Endothelial cell of umbilical vein (primary cell): ENCODE measurements at regions of chr7 and their contacts with region 1.

Region 1: DNA sequence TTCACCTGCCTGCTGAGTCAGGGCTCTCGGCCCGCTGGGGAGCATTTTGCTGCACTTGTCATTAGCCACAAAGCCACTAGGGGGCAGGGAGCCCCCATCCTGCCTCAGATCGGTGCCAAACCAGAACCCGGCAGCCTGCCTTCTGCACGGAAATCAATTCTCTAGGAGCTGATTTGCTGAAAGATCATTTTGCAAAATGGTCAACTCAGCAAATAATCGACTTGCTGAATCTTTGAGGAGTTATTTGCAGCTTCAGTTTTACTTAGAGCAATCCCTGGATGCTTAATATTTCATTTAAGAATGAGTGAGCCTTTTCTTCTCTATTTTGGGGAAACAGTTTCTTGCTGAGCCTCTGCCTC is 1.7 kb upstream of the GIMAP8 start:
- DNase-seq: peak; percentile 87
- H3K4me3 ChIP-seq: no peak overlapping the region
- H3K27ac ChIP-seq: no peak overlapping the region
- H3K4me1 ChIP-seq: peaks cover 33% of the 10 kb centered on the region
- H3K27me3 ChIP-seq: no peaks in the 10 kb centered on the region
- CTCF ChIP-seq: peak; percentile 93 to 96
- POLR2A ChIP-seq: no peak

Region 2: DNA sequence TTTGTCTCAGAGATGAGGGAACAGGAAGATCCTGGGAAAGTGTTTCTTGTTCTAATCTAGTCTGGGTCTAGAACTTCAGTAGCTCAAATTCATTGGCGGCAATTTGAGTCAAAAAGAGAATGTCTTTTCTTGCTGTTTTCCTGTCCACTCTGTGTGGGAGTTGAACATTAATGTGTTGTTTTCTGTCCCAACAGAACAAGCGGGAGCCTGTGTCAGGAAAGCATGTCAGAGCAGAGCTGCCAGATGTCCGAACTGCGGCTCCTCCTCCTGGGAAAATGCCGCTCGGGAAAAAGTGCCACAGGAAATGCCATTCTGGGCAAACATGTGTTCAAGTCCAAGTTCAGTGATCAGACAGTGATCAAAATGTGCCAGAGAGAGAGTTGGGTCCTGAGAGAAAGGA is 17.7 kb after region 1 on chr7:
- CTCF ChIA-PET with region 1: interaction called, 9 read pairs
- POLR2A ChIA-PET with region 1: interaction called, 3 read pairs
- dilution Hi-C with region 1: no loop called
- intact Hi-C with region 1: loop called (anchors 1 kb)
- DNase-seq: peak; percentile 93
- H3K4me3 ChIP-seq: peak overlapping the region in 2 of 3 experiments; percentile 30 to 77
- H3K27ac ChIP-seq: peak overlapping the region; percentile 53
- H3K4me1 ChIP-seq: peaks cover 22% of the 10 kb centered on the region
- H3K27me3 ChIP-seq: no peaks in the 10 kb centered on the region
- CTCF ChIP-seq: no peak
- POLR2A ChIP-seq: no peak

Region 3: DNA sequence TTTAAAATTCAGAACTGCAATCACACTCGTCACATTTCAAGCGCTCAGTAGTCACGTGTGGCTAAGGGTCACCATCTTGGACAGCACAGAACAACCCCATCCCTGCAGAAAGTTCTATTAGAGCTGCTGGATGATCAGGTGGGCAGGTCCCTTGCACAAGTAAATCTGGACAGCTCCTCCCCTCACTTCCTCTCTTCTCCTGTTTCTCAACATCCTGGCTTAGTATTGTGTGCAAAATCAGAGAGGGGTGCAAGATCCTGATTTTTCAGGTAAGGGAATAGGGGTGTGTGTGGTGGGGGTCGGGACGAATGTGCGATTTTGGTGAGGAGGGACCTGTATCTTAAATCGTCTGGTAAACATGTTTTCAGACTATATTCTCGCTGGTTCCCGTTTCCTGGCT is 118.4 kb after region 1 on chr7 and contains the start of gene GIMAP4:
- CTCF ChIA-PET with region 1: interaction called, 19 read pairs
- POLR2A ChIA-PET with region 1: interaction called, 3 read pairs
- dilution Hi-C with region 1: no loop called
- intact Hi-C with region 1: loop called (anchors 1 kb)
- DNase-seq: peak; percentile 69
- H3K4me3 ChIP-seq: peak within 1 kb of the TSS; percentile 78 to 80 (median 79)
- H3K27ac ChIP-seq: peak within 1 kb of the TSS; percentile 63
- H3K4me1 ChIP-seq: peaks cover 62% of the 10 kb centered on the region
- H3K27me3 ChIP-seq: no peaks in the 10 kb centered on the region
- CTCF ChIP-seq: no peak
- POLR2A ChIP-seq: peak; percentile 49
- total RNA-seq, gene GIMAP4: 168 and 174 TPM in 2 replicates

Region 4: GRCh38 chr7:150631866-150632864 is 183.4 kb after region 1 on chr7 and contains the start of gene GIMAP6:
- CTCF ChIA-PET with region 1: interaction called, 12 read pairs
- POLR2A ChIA-PET with region 1: interaction called, 3 read pairs
- dilution Hi-C with region 1: no loop called
- intact Hi-C with region 1: loop called (anchors 1 kb)
- DNase-seq: peak; percentile 74
- H3K4me3 ChIP-seq: peak within 1 kb of the TSS; percentile 7 to 80 (median 49)
- H3K27ac ChIP-seq: peak within 1 kb of the TSS; percentile 43
- H3K4me1 ChIP-seq: peaks cover 35% of the 10 kb centered on the region
- H3K27me3 ChIP-seq: no peaks in the 10 kb centered on the region
- CTCF ChIP-seq: no peak
- POLR2A ChIP-seq: peak; percentile 69
- total RNA-seq, gene GIMAP6: 85.0 and 87.8 TPM in 2 replicates

Region 5: DNA sequence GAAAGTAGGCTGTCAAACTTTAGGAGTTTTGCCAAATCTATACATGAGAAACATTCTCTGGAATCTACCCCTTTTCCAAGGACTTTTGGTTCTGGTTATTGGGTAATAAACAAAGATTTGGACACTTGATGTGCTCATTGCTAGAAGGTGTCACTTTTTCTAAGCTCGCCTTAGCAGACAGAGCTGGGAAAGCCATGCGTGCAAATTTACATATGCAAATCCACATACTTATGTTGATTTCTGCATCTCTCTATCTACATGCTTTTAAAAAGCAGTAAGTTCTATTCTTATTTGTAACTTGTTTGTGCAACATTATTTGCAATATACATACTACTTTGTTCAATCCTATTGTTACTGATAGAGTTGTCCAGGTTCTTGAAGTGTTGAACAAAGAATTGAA is 205.9 kb after region 1 on chr7:
- CTCF ChIA-PET with region 1: no interaction called
- POLR2A ChIA-PET with region 1: no interaction called
- dilution Hi-C with region 1: no loop called
- intact Hi-C with region 1: no loop called
- DNase-seq: no peak
- H3K4me3 ChIP-seq: no peak overlapping the region
- H3K27ac ChIP-seq: no peak overlapping the region
- H3K4me1 ChIP-seq: no peaks in the 10 kb centered on the region
- H3K27me3 ChIP-seq: no peaks in the 10 kb centered on the region
- CTCF ChIP-seq: no peak
- POLR2A ChIP-seq: no peak

Region 6: DNA sequence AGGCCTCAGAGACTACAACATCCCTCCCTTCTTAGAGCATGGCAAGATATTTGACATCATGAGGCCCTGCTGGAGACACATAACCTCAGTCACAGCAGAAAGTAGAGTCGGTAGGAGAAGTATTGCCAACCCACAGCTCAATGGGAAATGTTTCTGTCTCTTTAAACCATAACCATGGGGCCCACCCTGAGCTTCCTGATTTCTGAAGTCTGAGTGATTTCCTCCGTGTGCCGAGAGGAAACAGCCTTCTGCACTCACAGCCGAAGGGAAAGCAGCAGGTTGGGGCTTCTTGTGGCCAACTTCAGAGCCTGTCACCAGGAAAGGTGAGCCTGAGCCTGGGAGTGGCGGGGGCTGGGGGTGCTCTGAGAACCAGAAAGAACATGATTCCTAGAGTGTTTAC is 267.6 kb after region 1 on chr7 and contains the start of gene GIMAP1:
- CTCF ChIA-PET with region 1: interaction called, 19 read pairs
- POLR2A ChIA-PET with region 1: interaction called, 8 read pairs
- dilution Hi-C with region 1: no loop called
- intact Hi-C with region 1: loop called (anchors 1 kb)
- DNase-seq: peak; percentile 88
- H3K4me3 ChIP-seq: peak within 1 kb of the TSS; percentile 61 to 84 (median 78)
- H3K27ac ChIP-seq: peak within 1 kb of the TSS; percentile 39
- H3K4me1 ChIP-seq: peaks cover 18% of the 10 kb centered on the region
- H3K27me3 ChIP-seq: no peaks in the 10 kb centered on the region
- CTCF ChIP-seq: no peak
- POLR2A ChIP-seq: peak; percentile 97
- total RNA-seq, gene GIMAP1: 11.8 and 11.9 TPM in 2 replicates

Region 7: GRCh38 chr7:150753826-150754603 is 305.2 kb after region 1 on chr7:
- CTCF ChIA-PET with region 1: interaction called, 120 read pairs
- POLR2A ChIA-PET with region 1: interaction called, 3 read pairs
- dilution Hi-C with region 1: no loop called
- intact Hi-C with region 1: loop called (anchors 1 kb)
- DNase-seq: peak; percentile 95
- H3K4me3 ChIP-seq: no peak overlapping the region
- H3K27ac ChIP-seq: peak overlapping the region; percentile 2
- H3K4me1 ChIP-seq: peaks cover 22% of the 10 kb centered on the region
- H3K27me3 ChIP-seq: no peaks in the 10 kb centered on the region
- CTCF ChIP-seq: peak; percentile 21 to 55
- POLR2A ChIP-seq: no peak

Region 8: DNA sequence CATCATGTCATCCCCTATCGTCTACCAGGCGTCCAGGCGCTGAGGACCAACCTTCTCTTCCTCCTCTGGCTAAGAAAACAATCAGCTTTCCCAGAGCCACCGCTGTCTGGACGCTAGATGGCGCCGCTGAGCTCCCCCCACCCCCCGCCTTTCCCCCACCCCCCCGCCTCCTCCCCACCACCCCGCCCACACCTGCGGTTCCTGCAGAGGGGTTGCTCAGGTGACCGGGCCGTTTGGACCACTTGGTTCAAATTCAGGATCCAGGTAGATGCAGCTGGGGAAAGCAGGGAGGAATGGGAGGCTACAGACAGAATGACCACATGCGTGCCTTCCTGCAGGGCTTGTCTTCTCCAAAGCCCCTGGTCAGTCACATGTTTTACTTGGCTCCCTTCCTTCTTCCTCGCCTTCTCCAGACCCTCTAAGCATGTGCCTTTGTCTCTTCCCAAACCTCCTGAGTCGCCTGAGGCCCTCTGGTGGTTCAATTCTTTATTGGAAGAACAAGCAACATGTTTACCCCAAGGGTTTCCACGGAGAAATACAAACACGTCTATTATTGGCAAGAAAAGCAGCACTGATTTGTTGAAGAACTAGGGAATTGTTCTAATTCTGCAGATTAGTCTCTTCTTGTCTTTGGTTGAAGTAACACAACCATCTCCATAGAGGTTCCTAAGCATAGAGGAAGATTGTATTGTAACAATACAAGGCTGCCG is 428.2 kb after region 1 on chr7:
- CTCF ChIA-PET with region 1: interaction called, 8 read pairs
- POLR2A ChIA-PET with region 1: no interaction called
- dilution Hi-C with region 1: no loop called
- intact Hi-C with region 1: loop called (anchors 1 kb)
- DNase-seq: peak; percentile 89
- H3K4me3 ChIP-seq: no peak overlapping the region
- H3K27ac ChIP-seq: no peak overlapping the region
- H3K4me1 ChIP-seq: peaks cover 10% of the 10 kb centered on the region
- H3K27me3 ChIP-seq: peaks cover 8 to 50% of the 10 kb centered on the region in 2 experiments
- CTCF ChIP-seq: peak; percentile 46 to 63
- POLR2A ChIP-seq: no peak